BJ (cell line): ENCODE measurements at regions of chr3 and their contacts with region 1.

Region 1: GRCh38 chr3:128879125-128879969 is at the start of gene ACAD9:
- DNase-seq: peak; percentile 89
- H3K4me3 ChIP-seq: peak within 1 kb of the TSS; percentile 89
- H3K27me3 ChIP-seq: no peaks in the 10 kb centered on the region
- CTCF ChIP-seq: no peak
- polyA plus RNA-seq, gene ACAD9: 29.4 and 48.5 TPM in 2 replicates

Region 2: GRCh38 chr3:128845778-128846485 is 33.4 kb before region 1 on chr3:
- CTCF ChIA-PET with region 1: interaction called, 12 read pairs
- POLR2A ChIA-PET with region 1: no interaction called
- DNase-seq: no peak
- H3K4me3 ChIP-seq: peak overlapping the region; percentile 36
- H3K27me3 ChIP-seq: no peaks in the 10 kb centered on the region
- CTCF ChIP-seq: peak; percentile 60

Region 3: DNA sequence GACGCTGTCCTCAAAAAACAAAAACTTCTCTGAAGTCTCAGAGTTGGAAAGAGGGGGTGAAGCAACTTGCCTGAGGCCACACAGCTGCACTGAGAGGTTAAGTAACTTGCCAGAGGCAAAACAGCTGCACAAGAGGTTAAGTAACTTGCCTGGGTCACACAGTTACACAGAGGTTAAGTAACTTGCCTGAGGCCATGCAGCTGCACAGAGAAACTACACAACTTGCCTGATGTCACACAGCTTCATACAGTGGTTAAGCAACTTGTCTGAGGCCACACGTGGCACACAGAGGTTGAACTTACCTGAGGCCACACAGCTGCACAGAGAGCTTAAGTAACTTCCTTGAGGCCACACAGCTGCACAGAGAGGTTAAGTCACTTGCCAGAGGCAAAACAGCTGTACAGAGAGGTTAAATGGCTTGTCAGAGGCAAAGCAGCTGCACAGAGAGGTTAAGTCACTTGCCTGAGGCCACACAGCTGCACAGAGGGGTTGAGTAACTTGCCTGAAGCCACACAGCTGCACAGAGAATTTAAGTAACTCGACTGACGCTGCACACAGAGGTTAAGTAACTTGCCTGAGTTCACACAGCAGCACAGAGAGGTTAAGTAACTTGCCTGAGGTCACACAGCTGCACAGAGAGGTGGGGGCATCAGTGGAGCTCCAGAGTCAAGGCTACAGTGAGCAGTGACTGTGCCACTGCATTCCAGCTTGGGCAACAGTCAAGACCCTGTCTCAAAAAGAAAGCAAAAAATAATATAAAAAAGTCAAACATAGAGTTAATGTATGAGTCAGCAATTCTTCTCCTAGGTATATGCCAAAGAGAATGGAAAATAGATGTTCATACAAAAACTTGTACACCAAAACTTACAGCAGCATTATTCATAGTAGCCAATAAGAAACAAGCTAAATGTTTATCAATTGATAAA is 11.9 kb before region 1 on chr3:
- CTCF ChIA-PET with region 1: interaction called, 11 read pairs
- POLR2A ChIA-PET with region 1: no interaction called
- DNase-seq: no peak
- H3K4me3 ChIP-seq: no peak overlapping the region
- H3K27me3 ChIP-seq: no peaks in the 10 kb centered on the region
- CTCF ChIP-seq: no peak

Region 4: GRCh38 chr3:129428376-129429079 is 549.2 kb after region 1 on chr3 and contains the start of gene EFCAB12:
- CTCF ChIA-PET with region 1: no interaction called
- POLR2A ChIA-PET with region 1: interaction called, 13 read pairs
- DNase-seq: peak; percentile 66
- H3K4me3 ChIP-seq: peak within 1 kb of the TSS; percentile 48
- H3K27me3 ChIP-seq: no peaks in the 10 kb centered on the region
- CTCF ChIP-seq: no peak
- polyA plus RNA-seq, gene EFCAB12: 0.02 and 0.05 TPM in 2 replicates